AG04450 (cell line): ENCODE measurements at regions of chr18 and their contacts with region 1.

Region 1: DNA sequence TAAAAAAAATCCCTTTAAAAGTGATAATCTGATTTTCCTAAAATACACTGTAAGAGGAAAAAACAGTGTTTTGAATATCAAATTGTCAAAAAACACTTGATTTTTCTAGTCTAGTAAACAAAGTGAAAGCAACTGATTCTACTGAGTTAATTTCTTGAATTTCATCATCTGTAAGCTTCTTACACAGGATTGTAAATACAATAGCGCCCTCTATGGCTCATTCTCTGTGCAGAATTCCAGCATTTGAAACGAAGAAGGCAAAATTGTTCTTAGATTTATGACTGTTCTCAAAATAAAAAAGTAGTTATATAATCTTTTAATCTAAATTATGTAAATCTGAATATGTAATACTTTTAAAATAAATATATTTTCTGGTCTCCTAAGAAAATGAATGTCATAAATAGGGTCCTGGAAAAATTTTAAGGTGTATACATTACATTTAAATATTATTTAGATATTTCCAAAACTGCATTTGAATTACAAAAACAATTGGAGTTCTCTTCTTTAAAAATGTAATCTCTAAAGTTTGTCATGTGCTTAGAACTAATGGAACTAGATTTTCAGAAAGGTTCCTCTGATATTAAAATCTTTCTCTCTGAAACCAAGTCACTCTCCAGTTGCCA is 176.9 kb upstream of the MC4R start:
- DNase-seq: peak; percentile 51
- H3K4me3 ChIP-seq: no peak overlapping the region
- H3K27ac ChIP-seq: no peak overlapping the region
- H3K27me3 ChIP-seq: no peaks in the 10 kb centered on the region
- CTCF ChIP-seq: peak; percentile 86

Region 2: GRCh38 chr18:59837586-59837985 is 711.9 kb before region 1 on chr18:
- CTCF ChIA-PET with region 1: interaction called, 15 read pairs
- POLR2A ChIA-PET with region 1: no interaction called
- DNase-seq: no peak
- H3K4me3 ChIP-seq: no peak overlapping the region
- H3K27ac ChIP-seq: no peak overlapping the region
- H3K27me3 ChIP-seq: no peaks in the 10 kb centered on the region
- CTCF ChIP-seq: peak; percentile 94

Region 3: DNA sequence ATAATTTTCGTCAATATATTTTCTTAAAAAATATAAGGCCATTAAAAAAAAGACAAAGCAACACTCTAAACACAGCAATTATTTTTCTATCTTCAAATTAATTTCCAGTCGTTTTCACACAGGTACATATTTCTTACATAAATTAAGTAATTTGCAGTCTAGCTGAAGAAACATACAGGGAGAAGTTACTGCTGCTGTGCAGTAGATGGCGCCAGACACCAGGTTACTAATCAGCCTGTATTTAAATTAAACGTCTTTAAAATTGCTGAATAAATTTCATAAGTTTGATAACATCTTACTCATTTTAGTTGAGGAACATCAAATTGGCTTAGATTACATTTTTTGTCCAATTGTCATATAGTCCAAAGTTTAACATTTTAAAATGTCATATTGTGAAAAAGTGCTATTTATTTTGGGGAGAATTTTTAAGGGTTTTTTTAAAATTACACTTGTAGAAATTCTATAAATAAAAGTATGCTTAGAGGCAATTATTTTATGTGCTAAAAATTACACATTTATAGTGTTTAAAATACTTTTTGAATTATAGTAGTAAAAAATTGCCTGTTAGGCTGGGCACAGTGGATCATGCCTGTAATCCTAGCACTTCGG is 561.2 kb before region 1 on chr18:
- CTCF ChIA-PET with region 1: interaction called, 54 read pairs
- POLR2A ChIA-PET with region 1: no interaction called
- DNase-seq: peak; percentile 51
- H3K4me3 ChIP-seq: no peak overlapping the region
- H3K27ac ChIP-seq: no peak overlapping the region
- H3K27me3 ChIP-seq: peaks cover 4% of the 10 kb centered on the region
- CTCF ChIP-seq: peak; percentile 97

Region 4: GRCh38 chr18:60019463-60019840 is 530.0 kb before region 1 on chr18:
- CTCF ChIA-PET with region 1: interaction called, 10 read pairs
- POLR2A ChIA-PET with region 1: no interaction called
- DNase-seq: peak; percentile 68
- H3K4me3 ChIP-seq: no peak overlapping the region
- H3K27ac ChIP-seq: peak overlapping the region; percentile 42
- H3K27me3 ChIP-seq: no peaks in the 10 kb centered on the region
- CTCF ChIP-seq: no peak

Region 5: DNA sequence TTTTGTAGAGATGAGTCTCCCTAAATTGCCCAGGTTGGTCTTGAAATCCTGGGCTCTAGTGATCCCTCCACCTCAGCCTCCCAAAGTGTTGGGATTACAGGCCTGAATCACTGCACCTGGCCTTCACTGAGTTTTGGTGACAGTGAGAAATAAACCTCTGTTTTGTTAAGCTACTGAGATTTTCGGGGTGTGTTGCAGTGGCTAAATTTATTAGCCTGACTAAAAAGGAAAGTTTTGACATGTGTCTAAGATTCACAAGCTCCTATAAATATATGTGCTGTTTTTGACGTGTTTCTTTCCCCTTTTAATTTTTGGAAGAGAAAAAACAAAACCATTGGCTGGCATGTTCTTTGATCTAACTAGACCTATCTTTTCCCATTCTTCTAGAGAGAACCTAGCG is 13.6 kb after region 1 on chr18:
- CTCF ChIA-PET with region 1: interaction called, 12 read pairs
- POLR2A ChIA-PET with region 1: no interaction called
- DNase-seq: no peak
- H3K4me3 ChIP-seq: no peak overlapping the region
- H3K27ac ChIP-seq: no peak overlapping the region
- H3K27me3 ChIP-seq: no peaks in the 10 kb centered on the region
- CTCF ChIP-seq: no peak